ENCODE measurements at regions of chr4 and their contacts with region 1.

Region 1: GRCh38 chr4:103204111-103204510 is 6.0 kb upstream of the CENPE start:
- DNase-seq: peak; percentile 16
- ATAC-seq: peak; percentile 83
- H3K4me3 ChIP-seq: no peak overlapping the region
- H3K27ac ChIP-seq: no peak overlapping the region
- H3K4me1 ChIP-seq: no peaks in the 10 kb centered on the region
- H3K27me3 ChIP-seq: no peaks in the 10 kb centered on the region
- CTCF ChIP-seq: peak; percentile 42 to 61 (median 59); a peak in 4 of 6 replicates
- POLR2A ChIP-seq: no peak
- RAD21 ChIP-seq: peak; percentile 87

Region 2: DNA sequence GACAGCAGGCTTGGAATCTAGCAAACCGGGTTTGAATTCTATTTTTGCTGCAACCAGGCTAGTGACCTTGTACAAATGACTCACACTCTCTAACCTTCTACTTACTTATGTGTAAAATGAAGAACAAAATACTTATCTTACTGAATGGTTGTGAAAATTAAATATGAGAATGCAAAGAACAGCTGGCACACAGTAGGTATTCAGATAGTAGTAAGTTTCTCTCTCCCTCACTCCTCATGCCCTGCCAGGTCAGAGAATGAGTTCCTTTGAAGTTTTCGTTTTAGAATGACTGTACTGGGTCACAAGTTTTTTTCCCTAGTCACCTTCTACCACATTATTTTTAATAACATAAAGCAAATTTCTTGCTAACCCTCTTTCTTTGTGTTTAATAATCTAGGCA is 302.3 kb before region 1 on chr4:
- CTCF ChIA-PET with region 1: no interaction called
- POLR2A ChIA-PET with region 1: no interaction called
- RAD21 ChIA-PET with region 1: no interaction called
- intact Hi-C with region 1: no loop called
- DNase-seq: no peak
- ATAC-seq: no peak
- H3K4me3 ChIP-seq: no peak overlapping the region
- H3K27ac ChIP-seq: no peak overlapping the region
- H3K4me1 ChIP-seq: peaks cover 0 to 3% of the 10 kb centered on the region in 2 experiments; a peak in 1 of 4 replicates
- H3K27me3 ChIP-seq: no peaks in the 10 kb centered on the region
- CTCF ChIP-seq: no peak
- POLR2A ChIP-seq: no peak
- RAD21 ChIP-seq: no peak

Region 3: GRCh38 chr4:103732418-103732817 is 528.3 kb after region 1 on chr4:
- CTCF ChIA-PET with region 1: no interaction called
- POLR2A ChIA-PET with region 1: no interaction called
- RAD21 ChIA-PET with region 1: no interaction called
- intact Hi-C with region 1: no loop called
- DNase-seq: no peak
- ATAC-seq: no peak
- H3K4me3 ChIP-seq: no peak overlapping the region
- H3K27ac ChIP-seq: no peak overlapping the region
- H3K4me1 ChIP-seq: no peaks in the 10 kb centered on the region
- H3K27me3 ChIP-seq: no peaks in the 10 kb centered on the region
- CTCF ChIP-seq: no peak
- POLR2A ChIP-seq: no peak
- RAD21 ChIP-seq: no peak

Region 4: DNA sequence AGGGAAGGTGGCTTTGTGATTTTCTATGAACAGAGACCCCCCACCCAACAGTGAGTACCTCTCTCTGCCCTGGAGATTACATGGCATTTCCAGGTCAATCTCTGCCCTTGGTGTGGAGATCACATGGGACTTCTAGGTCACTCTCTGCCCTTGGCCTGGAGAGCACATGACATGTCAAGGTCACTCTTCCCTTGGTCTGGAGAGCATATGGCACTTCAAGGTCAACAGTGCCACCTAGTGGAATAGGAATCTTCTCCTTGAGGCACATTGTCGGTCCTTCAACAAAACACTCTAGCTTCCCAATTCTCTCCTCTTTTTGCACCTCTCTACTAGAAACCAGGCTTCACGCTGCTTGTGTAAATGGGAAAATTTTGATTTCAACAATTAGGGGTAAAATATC is 581.9 kb after region 1 on chr4:
- CTCF ChIA-PET with region 1: interaction called, 9 read pairs
- POLR2A ChIA-PET with region 1: no interaction called
- RAD21 ChIA-PET with region 1: interaction called in 1 of 2 experiments, 3 read pairs
- intact Hi-C with region 1: loop called (anchors 1 kb)
- DNase-seq: peak; percentile 56
- ATAC-seq: peak; percentile 91
- H3K4me3 ChIP-seq: no peak overlapping the region
- H3K27ac ChIP-seq: no peak overlapping the region
- H3K4me1 ChIP-seq: no peaks in the 10 kb centered on the region
- H3K27me3 ChIP-seq: no peaks in the 10 kb centered on the region
- CTCF ChIP-seq: peak; percentile 60 to 74 (median 64); a peak in 5 of 6 replicates
- POLR2A ChIP-seq: no peak
- RAD21 ChIP-seq: peak; percentile 87

Region 5: GRCh38 chr4:103915224-103915869 is 711.2 kb after region 1 on chr4:
- CTCF ChIA-PET with region 1: interaction called, 6 read pairs
- POLR2A ChIA-PET with region 1: no interaction called
- RAD21 ChIA-PET with region 1: no interaction called
- intact Hi-C with region 1: loop called (anchors 1 kb)
- DNase-seq: peak; percentile 19
- ATAC-seq: peak; percentile 59; the same call in 1 of the 2 replicates
- H3K4me3 ChIP-seq: no peak overlapping the region
- H3K27ac ChIP-seq: no peak overlapping the region
- H3K4me1 ChIP-seq: no peaks in the 10 kb centered on the region
- H3K27me3 ChIP-seq: no peaks in the 10 kb centered on the region
- CTCF ChIP-seq: peak; percentile 54 to 77 (median 73); a peak in 5 of 6 replicates
- POLR2A ChIP-seq: no peak
- RAD21 ChIP-seq: peak; percentile 76

Region 6: GRCh38 chr4:103934178-103934789 is 730.2 kb after region 1 on chr4:
- CTCF ChIA-PET with region 1: interaction called, 4 read pairs
- POLR2A ChIA-PET with region 1: interaction called, 4 read pairs
- RAD21 ChIA-PET with region 1: no interaction called
- intact Hi-C with region 1: loop called (anchors 2 kb)
- DNase-seq: peak; percentile 58
- ATAC-seq: peak; percentile 77
- H3K4me3 ChIP-seq: no peak overlapping the region
- H3K27ac ChIP-seq: no peak overlapping the region
- H3K4me1 ChIP-seq: no peaks in the 10 kb centered on the region
- H3K27me3 ChIP-seq: no peaks in the 10 kb centered on the region
- CTCF ChIP-seq: peak; percentile 53 to 77 (median 58)
- POLR2A ChIP-seq: no peak
- RAD21 ChIP-seq: peak; percentile 75

Region 7: GRCh38 chr4:103996637-103997036 is 792.5 kb after region 1 on chr4:
- CTCF ChIA-PET with region 1: no interaction called
- POLR2A ChIA-PET with region 1: no interaction called
- RAD21 ChIA-PET with region 1: no interaction called
- intact Hi-C with region 1: loop called (anchors 10 kb)
- DNase-seq: peak; percentile 78
- ATAC-seq: peak; percentile 91
- H3K4me3 ChIP-seq: peak overlapping the region; percentile 26 to 43
- H3K27ac ChIP-seq: peak overlapping the region; percentile 39; the same call in 1 of the 2 replicates
- H3K4me1 ChIP-seq: peaks cover 11 to 19% of the 10 kb centered on the region in 2 experiments; a peak in 3 of 4 replicates
- H3K27me3 ChIP-seq: no peaks in the 10 kb centered on the region
- CTCF ChIP-seq: no peak
- POLR2A ChIP-seq: no peak
- RAD21 ChIP-seq: no peak

Region 8: DNA sequence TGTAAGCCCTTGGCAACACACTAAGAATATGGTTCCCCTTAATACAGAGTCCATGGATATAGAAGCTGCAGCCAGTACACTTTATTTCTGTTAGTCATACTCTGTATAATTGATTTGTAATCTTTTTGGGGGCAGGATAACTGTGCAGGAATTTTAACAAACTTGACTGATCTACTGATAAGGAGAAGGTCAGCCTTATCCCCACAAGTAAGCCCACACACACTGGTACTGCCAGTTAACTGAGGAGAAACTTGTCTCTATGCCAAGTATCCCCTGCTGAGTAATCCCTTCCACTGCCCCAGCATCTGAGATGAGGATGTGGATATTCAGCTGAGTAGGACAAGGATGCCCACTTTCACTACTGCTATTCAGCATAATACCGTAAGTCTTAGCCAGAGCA is 1445.5 kb after region 1 on chr4:
- CTCF ChIA-PET with region 1: no interaction called
- POLR2A ChIA-PET with region 1: no interaction called
- RAD21 ChIA-PET with region 1: no interaction called
- intact Hi-C with region 1: no loop called
- DNase-seq: no peak
- ATAC-seq: no peak
- H3K4me3 ChIP-seq: no peak overlapping the region
- H3K27ac ChIP-seq: no peak overlapping the region
- H3K4me1 ChIP-seq: no peaks in the 10 kb centered on the region
- H3K27me3 ChIP-seq: no peaks in the 10 kb centered on the region
- CTCF ChIP-seq: no peak
- POLR2A ChIP-seq: no peak
- RAD21 ChIP-seq: no peak

Measured in HCT116 (cell line).